ENCODE measurements at regions of chr16 and their contacts with region 1.

Region 1: DNA sequence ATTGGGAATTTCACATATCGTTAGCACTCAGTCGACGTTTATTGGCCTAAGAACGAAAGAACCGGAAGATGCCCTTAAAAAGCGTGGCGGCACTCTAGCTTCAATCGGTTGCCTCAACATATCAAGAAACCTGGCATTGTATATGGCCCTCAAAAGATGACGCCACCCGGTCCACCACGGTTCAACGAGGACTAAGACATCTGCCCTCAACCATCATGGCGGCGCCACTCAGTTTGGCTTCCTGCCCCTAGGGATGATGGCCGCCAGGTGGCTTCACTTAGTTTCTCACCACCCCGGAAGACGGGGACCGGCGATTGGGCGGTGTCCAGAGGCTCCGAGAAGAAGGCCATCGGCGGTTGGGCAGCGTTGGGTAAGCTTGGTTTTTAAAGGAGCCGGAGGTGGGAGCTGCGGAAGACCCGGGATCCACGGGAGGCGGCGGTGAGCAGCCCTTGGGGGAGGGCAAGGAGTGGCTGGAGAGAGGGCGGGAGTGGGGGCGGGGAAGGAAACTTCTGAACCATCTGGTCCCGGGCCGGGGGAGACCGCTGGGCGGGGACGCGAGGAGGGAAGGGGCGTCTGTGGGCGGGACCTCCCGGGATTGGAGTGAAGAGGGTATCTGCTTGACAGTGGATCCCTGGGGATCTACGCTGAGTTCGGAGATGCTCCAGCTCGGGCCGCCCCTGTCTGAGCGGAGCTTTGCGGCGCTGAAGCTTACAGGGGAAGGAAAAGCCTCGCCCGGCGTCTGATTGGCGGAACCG is at the start of gene PRR14:
- DNase-seq: peak; percentile 95 to 99 (median 97)
- H3K4me3 ChIP-seq: peak within 1 kb of the TSS; percentile 100
- H3K4me3 Mint-ChIP-seq: peak within 1 kb of the TSS; percentile 92 to 100 (median 99)
- H3K27ac ChIP-seq: peak within 1 kb of the TSS; percentile 91
- H3K27ac Mint-ChIP-seq: peak within 1 kb of the TSS; percentile 95 to 99 (median 98)
- H3K4me1 ChIP-seq: peaks cover 20% of the 10 kb centered on the region
- H3K4me1 Mint-ChIP-seq: peaks cover 23 to 31% (median 26%) of the 10 kb centered on the region in 3 donors
- H3K27me3 ChIP-seq: no peaks in the 10 kb centered on the region
- H3K27me3 Mint-ChIP-seq: peaks cover 0 to 2% of the 10 kb centered on the region in 2 donors
- total RNA-seq, gene PRR14: 87.5 to 92.5 TPM

Region 2: GRCh38 chr16:30637942-30638341 is 12.6 kb before region 1 on chr16:
- CTCF ChIA-PET with region 1: interaction called, 7 read pairs
- POLR2A ChIA-PET with region 1: interaction called, 10 read pairs
- DNase-seq: no peak
- H3K4me3 ChIP-seq: no peak overlapping the region
- H3K4me3 Mint-ChIP-seq: no peak overlapping the region
- H3K27ac ChIP-seq: no peak overlapping the region
- H3K27ac Mint-ChIP-seq: peak overlapping the region in 2 of 8 donors; percentile 67 to 79
- H3K4me1 ChIP-seq: peaks cover 16% of the 10 kb centered on the region
- H3K4me1 Mint-ChIP-seq: peaks cover 14 to 17% (median 15%) of the 10 kb centered on the region in 3 donors
- H3K27me3 ChIP-seq: no peaks in the 10 kb centered on the region
- H3K27me3 Mint-ChIP-seq: peaks cover 0 to 2% of the 10 kb centered on the region in 2 donors

Region 3: DNA sequence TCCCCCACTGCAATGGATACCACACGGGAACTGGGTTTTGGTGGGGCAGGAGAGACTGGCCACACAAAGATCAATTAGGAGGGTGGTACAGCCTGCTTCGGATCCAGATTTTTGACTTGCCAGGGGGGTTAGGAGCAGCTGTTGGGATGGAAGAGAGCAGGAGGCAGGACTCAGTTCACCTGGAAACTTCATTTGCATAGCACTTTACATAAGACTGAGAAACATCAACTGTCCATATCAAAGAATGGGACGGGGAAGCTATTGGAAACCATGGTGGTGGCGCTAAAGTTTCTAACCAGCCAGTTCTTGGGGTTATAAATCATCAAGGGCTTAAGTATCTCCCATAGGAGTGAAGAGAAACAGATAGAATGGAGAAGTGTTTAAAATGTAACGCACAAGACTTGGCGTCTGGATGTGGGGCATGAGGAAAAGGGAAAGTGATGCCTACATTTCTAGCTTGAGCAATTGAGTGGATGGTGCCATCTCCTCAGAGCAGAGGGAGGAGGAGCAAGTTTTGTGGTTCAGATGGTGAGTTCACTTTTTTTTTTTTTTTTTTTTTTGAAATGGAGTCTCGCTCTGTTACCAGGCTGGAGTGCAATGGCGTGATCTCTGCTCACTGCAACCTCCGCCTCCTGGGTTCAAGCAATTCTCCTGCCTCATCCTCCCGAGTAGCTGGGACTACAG is 42.0 kb after region 1 on chr16:
- CTCF ChIA-PET with region 1: interaction called, 25 read pairs
- POLR2A ChIA-PET with region 1: interaction called, 11 read pairs
- DNase-seq: no peak
- H3K4me3 ChIP-seq: no peak overlapping the region
- H3K4me3 Mint-ChIP-seq: no peak overlapping the region
- H3K27ac ChIP-seq: no peak overlapping the region
- H3K27ac Mint-ChIP-seq: peak overlapping the region in 2 of 8 donors; percentile 51 to 83
- H3K4me1 ChIP-seq: peaks cover 12% of the 10 kb centered on the region
- H3K4me1 Mint-ChIP-seq: peaks cover 11 to 20% (median 14%) of the 10 kb centered on the region in 3 donors
- H3K27me3 ChIP-seq: no peaks in the 10 kb centered on the region
- H3K27me3 Mint-ChIP-seq: no peaks in the 10 kb centered on the region

Region 4: DNA sequence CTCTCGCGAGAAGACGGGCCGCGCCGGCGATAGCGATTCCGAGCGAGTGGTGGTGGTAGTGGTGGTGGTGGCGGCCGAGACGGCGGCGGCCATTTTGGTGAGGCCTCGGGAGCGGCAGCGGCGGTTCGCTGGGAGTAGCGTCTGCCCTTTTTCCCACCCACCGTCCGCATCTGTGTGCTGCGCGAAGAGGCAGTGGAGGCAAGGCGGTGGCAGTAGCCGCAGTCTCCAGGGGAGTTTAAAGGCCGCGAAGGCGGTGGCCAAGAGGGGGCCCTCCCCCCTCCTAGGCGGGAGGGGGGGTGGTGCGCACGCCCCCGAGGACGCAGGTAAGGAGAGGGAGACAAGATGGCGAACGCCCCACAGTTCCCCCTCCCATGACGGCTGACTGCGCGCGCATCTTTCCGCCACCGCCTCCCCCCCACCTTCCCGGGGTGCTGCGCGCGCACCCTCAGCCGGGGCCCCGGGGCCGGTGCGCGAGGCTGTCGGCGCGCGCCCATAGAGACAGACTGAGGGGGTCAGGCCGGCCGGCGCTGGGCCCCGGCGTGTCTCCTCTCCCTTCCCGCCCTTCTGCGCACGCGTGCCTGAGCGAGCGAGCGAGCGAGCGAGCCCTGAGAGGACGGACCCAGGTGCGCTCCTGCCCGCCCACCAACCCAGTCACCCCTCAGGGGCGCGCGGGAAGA is 47.7 kb after region 1 on chr16:
- CTCF ChIA-PET with region 1: interaction called, 25 read pairs
- POLR2A ChIA-PET with region 1: interaction called, 11 read pairs
- DNase-seq: peak; percentile 98 to 100 (median 99)
- H3K4me3 ChIP-seq: peak overlapping the region; percentile 84
- H3K4me3 Mint-ChIP-seq: peak overlapping the region; percentile 95 to 99 (median 97)
- H3K27ac ChIP-seq: peak overlapping the region; percentile 98
- H3K27ac Mint-ChIP-seq: peak overlapping the region; percentile 98 to 100 (median 100)
- H3K4me1 ChIP-seq: peaks cover 34% of the 10 kb centered on the region
- H3K4me1 Mint-ChIP-seq: peaks cover 29 to 47% (median 41%) of the 10 kb centered on the region in 3 donors
- H3K27me3 ChIP-seq: no peaks in the 10 kb centered on the region
- H3K27me3 Mint-ChIP-seq: peaks cover 0 to 3% of the 10 kb centered on the region in 2 donors